PC-3 (cell line): ENCODE measurements at regions of chr7 and their contacts with region 1.

Region 1: DNA sequence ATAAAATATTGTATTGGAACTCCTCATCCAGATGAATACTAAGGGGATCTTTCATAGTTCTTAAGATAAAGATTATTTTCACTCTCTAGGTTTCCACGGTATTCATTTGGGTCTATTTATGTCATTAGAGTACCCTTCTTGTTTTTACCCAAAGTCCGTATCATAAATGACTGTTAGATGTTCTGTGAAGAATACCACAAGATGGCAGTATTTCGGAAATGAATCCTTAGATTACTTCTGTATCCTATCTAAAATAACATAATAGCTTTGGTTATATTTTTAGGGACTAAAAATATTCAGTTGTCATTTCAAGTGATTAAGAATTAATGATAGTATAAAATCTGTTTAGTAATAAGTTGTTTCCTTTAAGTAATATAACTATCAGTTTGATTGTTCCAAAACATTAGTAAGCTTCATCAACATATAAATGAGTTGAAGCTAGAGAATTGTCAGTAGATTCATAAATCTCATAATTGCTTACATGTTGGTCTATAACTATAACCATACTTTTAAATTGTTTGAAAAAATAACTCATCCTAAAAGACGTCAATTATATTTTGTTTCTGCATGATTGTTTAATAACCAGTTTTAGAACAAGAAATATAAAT is 337.5 kb upstream of the KCND2 start:
- DNase-seq: peak; percentile 60
- ATAC-seq: peak; percentile 80
- H3K4me3 ChIP-seq: no peak overlapping the region
- H3K27ac ChIP-seq: no peak overlapping the region
- H3K4me1 ChIP-seq: no peaks in the 10 kb centered on the region
- H3K27me3 ChIP-seq: no peaks in the 10 kb centered on the region
- CTCF ChIP-seq: peak; percentile 72

Region 2: DNA sequence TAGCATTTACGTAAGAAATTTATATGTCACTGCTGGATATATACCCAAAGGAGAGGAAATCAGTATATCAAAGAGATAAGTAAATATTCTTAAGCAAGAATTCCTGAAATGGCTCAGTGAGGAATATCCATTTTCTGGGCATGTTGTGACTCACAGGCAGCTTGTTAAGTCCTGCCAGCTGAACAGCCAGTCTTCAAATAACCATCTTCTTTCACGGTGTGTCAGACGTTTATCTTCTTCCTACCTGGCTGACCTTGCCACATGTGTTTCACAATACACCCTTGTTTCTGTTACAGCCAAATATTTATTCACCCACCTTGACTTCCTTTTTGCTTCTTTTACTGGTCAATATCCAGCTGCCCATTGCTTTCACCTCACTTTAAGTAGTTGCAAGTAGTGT is 1063.0 kb before region 1 on chr7:
- CTCF ChIA-PET with region 1: no interaction called
- POLR2A ChIA-PET with region 1: no interaction called
- intact Hi-C with region 1: no loop called
- DNase-seq: peak; percentile 41
- ATAC-seq: peak; percentile 84
- H3K4me3 ChIP-seq: no peak overlapping the region
- H3K27ac ChIP-seq: no peak overlapping the region
- H3K4me1 ChIP-seq: no peaks in the 10 kb centered on the region
- H3K27me3 ChIP-seq: no peaks in the 10 kb centered on the region
- CTCF ChIP-seq: no peak

Region 3: GRCh38 chr7:120089968-120090367 is 154.4 kb after region 1 on chr7:
- CTCF ChIA-PET with region 1: no interaction called
- POLR2A ChIA-PET with region 1: no interaction called
- intact Hi-C with region 1: loop called (anchors 1 kb)
- DNase-seq: peak; percentile 65
- ATAC-seq: peak; percentile 98
- H3K4me3 ChIP-seq: no peak overlapping the region
- H3K27ac ChIP-seq: no peak overlapping the region
- H3K4me1 ChIP-seq: no peaks in the 10 kb centered on the region
- H3K27me3 ChIP-seq: no peaks in the 10 kb centered on the region
- CTCF ChIP-seq: peak; percentile 59

Region 4: DNA sequence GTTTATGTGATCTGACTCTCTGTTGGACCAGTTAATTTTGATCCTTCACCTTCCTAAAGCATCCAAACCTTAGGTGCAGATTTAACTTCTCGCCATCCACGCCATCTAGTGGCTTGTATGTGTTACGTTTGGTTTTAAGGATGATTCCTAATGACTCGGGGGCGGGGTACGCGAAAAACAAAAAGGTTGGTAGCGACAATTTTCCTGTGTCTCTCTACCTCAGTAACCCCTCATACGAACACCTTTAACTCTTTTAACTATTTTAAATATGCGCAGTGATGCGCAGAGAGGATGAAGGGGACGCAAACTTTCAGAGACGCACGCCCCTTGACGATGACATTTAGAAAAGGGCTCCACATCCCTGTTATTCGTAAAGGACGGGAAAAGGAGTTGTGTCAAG is 336.7 kb after region 1 on chr7:
- CTCF ChIA-PET with region 1: no interaction called
- POLR2A ChIA-PET with region 1: no interaction called
- intact Hi-C with region 1: loop called (anchors 1 kb)
- DNase-seq: peak; percentile 66
- ATAC-seq: peak; percentile 67
- H3K4me3 ChIP-seq: peak overlapping the region; percentile 72
- H3K27ac ChIP-seq: no peak overlapping the region
- H3K4me1 ChIP-seq: no peaks in the 10 kb centered on the region
- H3K27me3 ChIP-seq: peaks cover 7% of the 10 kb centered on the region
- CTCF ChIP-seq: peak; percentile 86

Region 5: GRCh38 chr7:120725376-120726039 is 790.0 kb after region 1 on chr7:
- CTCF ChIA-PET with region 1: no interaction called
- POLR2A ChIA-PET with region 1: no interaction called
- intact Hi-C with region 1: loop called (anchors 2 kb)
- DNase-seq: peak; percentile 64
- ATAC-seq: no peak
- H3K4me3 ChIP-seq: peak overlapping the region; percentile 6; the same call in 1 of the 2 replicates
- H3K27ac ChIP-seq: no peak overlapping the region
- H3K4me1 ChIP-seq: no peaks in the 10 kb centered on the region
- H3K27me3 ChIP-seq: no peaks in the 10 kb centered on the region
- CTCF ChIP-seq: peak; percentile 79